Pancreas (tissue), 10 donors: ENCODE measurements at regions of chr13 and their contacts with region 1.

Region 1: GRCh38 chr13:49300739-49301589 is 53.2 kb downstream of the CDADC1 start:
- DNase-seq: peak in 3 of 6 donors; percentile 53 to 64 (median 63)
- ATAC-seq: peak; percentile 82 to 91 (median 87)
- H3K4me3 ChIP-seq: peak overlapping the region in 2 of 4 donors; percentile 12 to 20
- H3K27ac ChIP-seq: no peak overlapping the region
- H3K4me1 ChIP-seq: peaks cover 0 to 21% (median 0%) of the 10 kb centered on the region in 3 donors
- H3K27me3 ChIP-seq: no peaks in the 10 kb centered on the region
- CTCF ChIP-seq: peak; percentile 61 to 87 (median 78)

Region 2: GRCh38 chr13:48647630-48648029 is 653.3 kb before region 1 on chr13:
- intact Hi-C with region 1: no loop called
- DNase-seq: peak in 2 of 6 donors; percentile 16 to 18
- ATAC-seq: peak; percentile 60 to 92 (median 72)
- H3K4me3 ChIP-seq: no peak overlapping the region
- H3K27ac ChIP-seq: no peak overlapping the region
- H3K4me1 ChIP-seq: no peaks in the 10 kb centered on the region
- H3K27me3 ChIP-seq: no peaks in the 10 kb centered on the region
- CTCF ChIP-seq: no peak

Region 3: GRCh38 chr13:48892053-48892690 is 408.8 kb before region 1 on chr13:
- intact Hi-C with region 1: no loop called
- DNase-seq: no peak
- ATAC-seq: peak; percentile 72 to 92 (median 82)
- H3K4me3 ChIP-seq: no peak overlapping the region
- H3K27ac ChIP-seq: peak overlapping the region in 2 of 4 donors; percentile 13 to 38
- H3K4me1 ChIP-seq: peaks cover 0 to 8% (median 0%) of the 10 kb centered on the region in 3 donors
- H3K27me3 ChIP-seq: no peaks in the 10 kb centered on the region
- CTCF ChIP-seq: no peak

Region 4: GRCh38 chr13:49436890-49437289 is 135.9 kb after region 1 on chr13:
- intact Hi-C with region 1: loop called in 1 of 3 experiments (anchors 5 kb)
- DNase-seq: peak in 1 of 6 donors; percentile 16
- ATAC-seq: peak; percentile 63 to 87 (median 84)
- H3K4me3 ChIP-seq: no peak overlapping the region
- H3K27ac ChIP-seq: no peak overlapping the region
- H3K4me1 ChIP-seq: no peaks in the 10 kb centered on the region
- H3K27me3 ChIP-seq: no peaks in the 10 kb centered on the region
- CTCF ChIP-seq: no peak

Region 5: GRCh38 chr13:49606747-49607648 is 306.0 kb after region 1 on chr13:
- intact Hi-C with region 1: loop called in 1 of 3 experiments (anchors 5 kb)
- DNase-seq: peak; percentile 69 to 90 (median 83)
- ATAC-seq: peak; percentile 96 to 100 (median 100)
- H3K4me3 ChIP-seq: peak overlapping the region in 2 of 4 donors; percentile 21 to 37
- H3K27ac ChIP-seq: no peak overlapping the region
- H3K4me1 ChIP-seq: no peaks in the 10 kb centered on the region
- H3K27me3 ChIP-seq: no peaks in the 10 kb centered on the region
- CTCF ChIP-seq: peak; percentile 16 to 60 (median 55)

Region 6: GRCh38 chr13:50529154-50529882 is 1228.4 kb after region 1 on chr13:
- intact Hi-C with region 1: no loop called
- DNase-seq: peak; percentile 73 to 96 (median 82)
- ATAC-seq: peak; percentile 84 to 95 (median 91)
- H3K4me3 ChIP-seq: no peak overlapping the region
- H3K27ac ChIP-seq: peak overlapping the region in 3 of 4 donors; percentile 11 to 25 (median 15)
- H3K4me1 ChIP-seq: peaks cover 8 to 29% (median 19%) of the 10 kb centered on the region in 3 donors
- H3K27me3 ChIP-seq: no peaks in the 10 kb centered on the region
- CTCF ChIP-seq: no peak